CD8-positive, alpha-beta memory T cell (primary cell): ENCODE measurements at regions of chr17 and their contacts with region 1.

Region 1: DNA sequence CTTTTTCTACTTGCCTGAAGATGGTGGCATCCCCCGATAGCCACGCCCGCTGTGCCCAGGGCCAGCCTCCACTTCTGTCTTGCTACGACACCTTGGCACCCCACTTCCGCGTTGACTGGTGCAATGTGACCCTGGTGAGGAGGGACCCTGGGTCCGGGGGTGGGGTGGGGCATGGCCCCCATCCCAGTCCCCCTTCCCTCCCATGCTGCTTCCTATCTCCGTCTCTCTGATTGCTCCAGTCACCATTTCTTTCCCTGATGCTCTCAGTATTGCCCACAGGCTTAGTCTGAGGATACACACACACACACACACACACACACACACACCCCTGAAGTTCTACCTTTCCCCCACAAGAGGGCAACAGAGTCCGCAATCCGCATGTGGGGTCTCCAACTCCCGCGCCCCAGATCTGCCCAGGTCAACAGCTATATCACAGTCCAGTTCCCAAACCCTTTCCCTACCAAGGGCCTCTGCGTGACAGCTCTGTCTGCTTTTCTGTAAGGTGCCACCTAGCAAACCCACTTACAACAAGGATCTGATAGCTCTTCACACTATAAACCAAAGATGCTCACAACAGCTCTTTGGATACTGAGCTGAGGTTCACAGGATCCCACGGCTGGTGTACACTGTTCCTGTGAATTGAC is 3.4 kb downstream of the SGCA start:
- DNase-seq: peak; percentile 44 to 82 (median 68)
- H3K4me3 ChIP-seq: peak overlapping the region; percentile 52
- H3K4me3 Mint-ChIP-seq: peak overlapping the region; percentile 47 to 88 (median 66)
- H3K27ac ChIP-seq: peak overlapping the region; percentile 11
- H3K27ac Mint-ChIP-seq: peak overlapping the region; percentile 59 to 90 (median 84)
- H3K4me1 ChIP-seq: peaks cover 15% of the 10 kb centered on the region
- H3K4me1 Mint-ChIP-seq: peaks cover 8 to 13% (median 11%) of the 10 kb centered on the region in 3 donors
- H3K27me3 ChIP-seq: no peaks in the 10 kb centered on the region
- H3K27me3 Mint-ChIP-seq: peaks cover 0 to 5% of the 10 kb centered on the region in 2 donors

Region 2: DNA sequence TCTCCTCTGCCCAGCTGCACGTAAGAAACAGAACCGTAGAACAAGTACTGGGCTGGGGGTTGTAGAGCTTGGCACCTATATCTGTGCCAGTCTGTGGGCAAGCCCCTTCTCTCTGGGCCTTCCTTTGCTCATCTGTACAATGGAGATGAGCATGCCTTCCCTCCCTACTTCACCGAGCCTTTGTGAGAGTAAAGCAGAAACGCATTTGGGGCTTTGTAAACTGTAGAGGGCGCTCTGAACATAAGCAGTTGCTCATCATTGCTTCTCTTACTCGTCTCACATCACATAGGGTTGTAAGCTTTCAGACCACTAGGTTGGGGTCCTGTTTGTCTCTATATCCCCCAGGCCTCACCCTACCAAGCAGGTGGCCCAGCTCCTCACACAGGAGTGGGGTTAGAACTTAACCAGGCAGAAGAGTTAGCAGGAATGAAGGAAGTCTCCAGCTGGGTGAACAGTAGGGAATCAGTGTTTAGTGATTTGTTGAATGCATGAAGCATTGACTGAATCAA is 54.3 kb before region 1 on chr17:
- CTCF ChIA-PET with region 1: interaction called, 20 read pairs
- POLR2A ChIA-PET with region 1: no interaction called
- DNase-seq: no peak
- H3K4me3 ChIP-seq: no peak overlapping the region
- H3K4me3 Mint-ChIP-seq: peak overlapping the region in 1 of 7 donors; percentile 4
- H3K27ac ChIP-seq: no peak overlapping the region
- H3K27ac Mint-ChIP-seq: peak overlapping the region in 3 of 8 donors; percentile 10 to 69 (median 49)
- H3K4me1 ChIP-seq: no peaks in the 10 kb centered on the region
- H3K4me1 Mint-ChIP-seq: peaks cover 5 to 11% (median 5%) of the 10 kb centered on the region in 3 donors
- H3K27me3 ChIP-seq: peaks cover 5% of the 10 kb centered on the region
- H3K27me3 Mint-ChIP-seq: peaks cover 13 to 44% of the 10 kb centered on the region in 2 donors

Region 3: DNA sequence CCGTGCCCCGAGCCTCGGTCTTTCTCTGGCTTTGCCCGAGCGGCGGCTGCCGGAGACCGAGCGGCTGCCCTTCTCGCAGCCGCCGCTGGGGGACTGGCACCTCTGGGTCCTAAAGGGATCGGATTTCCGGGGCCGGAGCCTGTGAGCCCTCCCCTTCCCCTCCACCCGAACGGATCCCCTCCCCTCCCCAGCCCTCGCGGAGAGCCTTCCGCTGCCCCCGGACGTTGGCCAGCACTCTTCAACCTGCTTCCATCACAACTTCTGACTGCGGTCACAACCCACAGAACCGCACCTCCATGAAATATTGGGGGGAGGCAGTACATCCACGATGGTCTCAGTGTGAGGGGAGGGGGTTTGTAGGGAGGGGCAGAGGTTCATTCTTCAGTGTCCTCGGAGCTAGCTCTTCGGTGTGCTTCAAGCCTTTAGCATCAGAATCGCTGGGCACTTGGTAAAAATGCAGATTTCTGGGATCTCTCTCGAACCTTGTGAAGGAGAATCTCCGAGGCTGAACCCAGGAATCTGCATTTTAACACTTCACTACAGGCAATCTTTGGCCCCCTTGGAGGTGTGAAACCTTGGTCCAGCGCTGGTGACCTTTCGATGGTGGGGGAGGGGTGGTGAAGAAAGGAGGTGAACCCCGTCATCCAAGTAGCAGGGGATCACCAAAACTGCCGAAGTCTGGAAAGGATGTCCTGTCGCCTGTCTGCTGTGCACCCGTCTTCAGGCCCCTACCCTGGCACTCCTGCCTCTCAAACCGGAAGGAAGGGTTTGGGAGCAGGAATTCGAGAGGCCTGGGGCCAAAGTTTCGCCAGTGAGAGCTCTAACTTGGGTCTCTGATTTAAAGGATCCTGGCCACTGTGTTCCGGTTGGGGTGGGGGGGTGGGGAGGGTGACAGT is 18.0 kb before region 1 on chr17:
- CTCF ChIA-PET with region 1: interaction called, 10 read pairs
- POLR2A ChIA-PET with region 1: interaction called, 4 read pairs
- DNase-seq: peak; percentile 80 to 89 (median 83)
- H3K4me3 ChIP-seq: peak overlapping the region; percentile 80
- H3K4me3 Mint-ChIP-seq: peak overlapping the region; percentile 86 to 100 (median 90)
- H3K27ac ChIP-seq: peak overlapping the region; percentile 79
- H3K27ac Mint-ChIP-seq: peak overlapping the region; percentile 75 to 99 (median 94)
- H3K4me1 ChIP-seq: peaks cover 53% of the 10 kb centered on the region
- H3K4me1 Mint-ChIP-seq: peaks cover 27 to 41% (median 34%) of the 10 kb centered on the region in 3 donors
- H3K27me3 ChIP-seq: no peaks in the 10 kb centered on the region
- H3K27me3 Mint-ChIP-seq: peaks cover 0 to 3% of the 10 kb centered on the region in 2 donors

Region 4: DNA sequence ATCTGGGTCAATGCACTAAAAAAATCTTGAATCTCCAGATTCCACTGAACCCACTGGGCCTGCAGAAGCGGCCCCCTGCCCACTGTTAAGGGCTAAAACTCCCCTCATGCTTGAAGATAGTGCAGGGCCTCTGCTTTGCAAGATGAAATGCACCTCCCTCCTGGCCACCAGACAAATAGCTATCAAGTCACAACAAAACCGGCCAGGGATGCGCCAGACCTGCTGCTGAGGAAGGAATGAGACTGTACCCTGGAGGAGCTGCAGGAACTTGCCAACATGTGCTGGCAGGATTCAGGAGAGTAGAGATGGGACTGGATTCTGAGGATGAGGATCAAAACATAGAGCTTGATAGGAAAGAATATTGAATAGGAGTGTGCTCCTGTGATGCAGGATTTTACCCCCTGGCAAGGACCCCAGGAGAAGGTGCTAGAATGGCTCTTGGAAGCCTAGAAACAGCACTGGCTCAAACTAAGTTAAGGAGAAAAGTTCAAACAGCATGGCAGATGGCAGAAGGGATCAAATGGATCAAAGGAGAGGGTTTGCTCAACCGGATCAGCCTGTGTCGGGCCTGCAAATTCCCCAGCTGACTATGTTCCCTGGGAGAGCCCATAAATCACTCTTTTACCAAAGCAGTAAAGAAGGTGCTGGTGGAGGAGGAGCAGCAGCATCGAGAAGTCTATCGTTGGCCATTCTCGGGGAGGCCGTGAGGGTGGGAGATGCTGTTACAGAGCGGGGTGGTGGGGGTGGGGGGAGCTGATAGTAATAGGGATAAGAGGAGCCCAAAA is 149.4 kb after region 1 on chr17:
- CTCF ChIA-PET with region 1: no interaction called
- POLR2A ChIA-PET with region 1: no interaction called
- DNase-seq: no peak
- H3K4me3 ChIP-seq: no peak overlapping the region
- H3K4me3 Mint-ChIP-seq: no peak overlapping the region
- H3K27ac ChIP-seq: no peak overlapping the region
- H3K27ac Mint-ChIP-seq: no peak overlapping the region
- H3K4me1 ChIP-seq: no peaks in the 10 kb centered on the region
- H3K4me1 Mint-ChIP-seq: no peaks in the 10 kb centered on the region
- H3K27me3 ChIP-seq: no peaks in the 10 kb centered on the region
- H3K27me3 Mint-ChIP-seq: peaks cover 2 to 8% of the 10 kb centered on the region in 2 donors

Region 5: GRCh38 chr17:50806141-50806643 is 636.9 kb after region 1 on chr17:
- CTCF ChIA-PET with region 1: no interaction called
- POLR2A ChIA-PET with region 1: no interaction called
- DNase-seq: peak in 1 of 5 donors; percentile 29
- H3K4me3 ChIP-seq: no peak overlapping the region
- H3K4me3 Mint-ChIP-seq: no peak overlapping the region
- H3K27ac ChIP-seq: no peak overlapping the region
- H3K27ac Mint-ChIP-seq: no peak overlapping the region
- H3K4me1 ChIP-seq: no peaks in the 10 kb centered on the region
- H3K4me1 Mint-ChIP-seq: no peaks in the 10 kb centered on the region
- H3K27me3 ChIP-seq: no peaks in the 10 kb centered on the region
- H3K27me3 Mint-ChIP-seq: peaks cover 0 to under 1% of the 10 kb centered on the region in 2 donors